Activated naive CD4-positive, alpha-beta T cell treated with anti-CD3 and anti-CD28 coated beads for 36 hours (primary cell): ENCODE measurements at regions of chr2 and their contacts with region 1.

Region 1: GRCh38 chr2:182291296-182291695 is 135.5 kb downstream of the PDE1A start:
- DNase-seq: no peak
- H3K4me3 Mint-ChIP-seq: no peak overlapping the region
- H3K27ac Mint-ChIP-seq: no peak overlapping the region
- H3K4me1 Mint-ChIP-seq: no peaks in the 10 kb centered on the region
- H3K27me3 Mint-ChIP-seq: peaks cover 4% of the 10 kb centered on the region

Region 2: GRCh38 chr2:181836583-181836982 is 454.7 kb before region 1 on chr2:
- CTCF ChIA-PET with region 1: no interaction called
- intact Hi-C with region 1: no loop called
- DNase-seq: no peak
- H3K4me3 Mint-ChIP-seq: no peak overlapping the region
- H3K27ac Mint-ChIP-seq: no peak overlapping the region
- H3K4me1 Mint-ChIP-seq: no peaks in the 10 kb centered on the region
- H3K27me3 Mint-ChIP-seq: peaks cover 11% of the 10 kb centered on the region

Region 3: DNA sequence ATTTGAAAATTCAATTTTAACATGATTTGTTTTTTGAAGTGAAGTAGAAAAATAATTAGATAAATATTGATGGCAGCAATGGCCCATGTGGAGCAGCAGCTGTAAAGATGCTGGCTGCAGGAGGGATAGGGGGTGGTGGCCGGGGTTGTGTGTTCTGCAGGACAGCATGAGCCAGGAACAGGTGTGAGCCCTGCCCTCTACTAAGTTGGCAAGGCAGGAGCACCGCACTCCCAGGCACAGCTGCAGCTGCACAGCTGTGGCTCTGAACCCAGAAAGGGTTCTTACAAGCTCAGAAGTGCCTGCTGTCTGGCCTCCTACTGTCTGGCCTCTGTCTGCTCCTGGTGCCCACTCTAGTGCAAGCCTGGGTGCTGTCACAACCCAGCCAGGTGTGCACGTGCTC is 777.3 kb after region 1 on chr2:
- CTCF ChIA-PET with region 1: no interaction called
- intact Hi-C with region 1: loop called (anchors 5 kb)
- DNase-seq: no peak
- H3K4me3 Mint-ChIP-seq: no peak overlapping the region
- H3K27ac Mint-ChIP-seq: no peak overlapping the region
- H3K4me1 Mint-ChIP-seq: no peaks in the 10 kb centered on the region
- H3K27me3 Mint-ChIP-seq: peaks cover 17% of the 10 kb centered on the region